ENCODE measurements at regions of chr1 and their contacts with region 1.

Region 1: GRCh38 chr1:117758444-117759316 is 152.8 kb downstream of the TENT5C start:
- DNase-seq: peak; percentile 58 to 69
- H3K4me3 ChIP-seq: peak overlapping the region; percentile 36 to 64 (median 46)
- H3K27ac ChIP-seq: peak overlapping the region in 1 of 2 donors; percentile 4
- H3K4me1 ChIP-seq: no peaks in the 10 kb centered on the region
- H3K27me3 ChIP-seq: no peaks in the 10 kb centered on the region
- CTCF ChIP-seq: peak; percentile 57 to 85 (median 82)
- POLR2A ChIP-seq: no peak

Region 2: DNA sequence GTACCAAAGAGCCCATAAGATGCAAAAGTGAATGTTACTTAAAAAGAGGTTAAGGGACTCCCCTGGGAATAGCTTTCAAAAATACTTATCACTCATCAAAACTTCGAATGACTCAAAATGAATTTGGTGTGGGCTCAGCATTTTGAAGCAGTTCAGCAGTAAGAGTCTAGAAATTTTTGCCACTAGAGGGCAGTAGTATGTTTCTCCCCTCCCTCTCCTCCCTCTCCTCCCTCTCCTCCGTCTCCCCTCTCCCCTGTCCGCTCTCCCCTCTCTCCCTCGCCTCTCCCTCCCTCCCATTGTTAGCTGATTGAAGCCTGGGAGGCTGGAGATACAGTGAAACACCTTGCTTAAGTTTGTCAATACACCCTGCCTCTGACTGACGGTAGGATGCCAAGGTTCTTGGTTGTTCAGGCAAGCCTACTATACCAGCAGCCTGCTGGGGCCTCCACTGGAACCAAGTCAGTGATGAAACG is 223.6 kb before region 1 on chr1:
- intact Hi-C with region 1: loop called (anchors 10 kb)
- DNase-seq: no peak
- H3K4me3 ChIP-seq: no peak overlapping the region
- H3K27ac ChIP-seq: no peak overlapping the region
- H3K4me1 ChIP-seq: no peaks in the 10 kb centered on the region
- H3K27me3 ChIP-seq: no peaks in the 10 kb centered on the region
- CTCF ChIP-seq: peak; percentile 30 to 82 (median 74)
- POLR2A ChIP-seq: no peak